WTC11 (cell line): ENCODE measurements at regions of chr6 and their contacts with region 1.

Region 1: GRCh38 chr6:24283043-24283985 is 74.5 kb downstream of the DCDC2 start:
- DNase-seq: peak; percentile 74
- ATAC-seq: peak; percentile 95
- H3K4me3 Mint-ChIP-seq: peak overlapping the region; percentile 48
- H3K27ac Mint-ChIP-seq: no peak overlapping the region
- H3K4me1 Mint-ChIP-seq: no peaks in the 10 kb centered on the region
- H3K27me3 Mint-ChIP-seq: no peaks in the 10 kb centered on the region
- CTCF ChIP-seq: no peak; the same call in 1 of the 2 replicates

Region 2: DNA sequence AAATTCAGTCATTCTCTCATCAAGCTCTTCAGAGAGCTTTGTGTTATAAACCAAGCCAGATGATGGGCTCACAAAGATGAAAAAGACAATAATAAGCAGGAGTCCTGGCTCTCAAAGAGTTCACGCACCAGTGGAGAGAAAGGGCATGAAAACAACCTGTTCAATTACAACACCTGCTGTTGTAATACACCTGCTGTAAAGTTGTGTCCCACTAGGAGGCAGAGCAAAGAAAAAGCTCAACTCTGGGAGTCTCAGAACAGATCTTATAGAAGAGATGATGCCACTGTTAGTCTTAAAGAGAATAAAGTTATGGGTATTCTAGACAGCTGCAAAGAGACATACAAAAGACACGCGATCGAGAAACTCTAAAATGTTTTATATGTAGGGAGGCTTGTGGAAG is 26.0 kb before region 1 on chr6:
- CTCF ChIA-PET with region 1: interaction called, 13 read pairs
- POLR2A ChIA-PET with region 1: no interaction called
- DNase-seq: no peak
- ATAC-seq: peak; percentile 90
- H3K4me3 Mint-ChIP-seq: no peak overlapping the region
- H3K27ac Mint-ChIP-seq: peak overlapping the region; percentile 50; the same call in 1 of the 2 replicates
- H3K4me1 Mint-ChIP-seq: peaks cover 18% of the 10 kb centered on the region
- H3K27me3 Mint-ChIP-seq: peaks cover 2% of the 10 kb centered on the region; the same call in 1 of the 2 replicates
- CTCF ChIP-seq: no peak; the same call in 1 of the 2 replicates

Region 3: GRCh38 chr6:24376866-24377265 is 93.6 kb after region 1 on chr6:
- CTCF ChIA-PET with region 1: interaction called, 10 read pairs
- POLR2A ChIA-PET with region 1: interaction called, 3 read pairs
- DNase-seq: no peak
- ATAC-seq: no peak
- H3K4me3 Mint-ChIP-seq: no peak overlapping the region
- H3K27ac Mint-ChIP-seq: no peak overlapping the region
- H3K4me1 Mint-ChIP-seq: peaks cover 14% of the 10 kb centered on the region
- H3K27me3 Mint-ChIP-seq: no peaks in the 10 kb centered on the region
- CTCF ChIP-seq: no peak

Region 4: DNA sequence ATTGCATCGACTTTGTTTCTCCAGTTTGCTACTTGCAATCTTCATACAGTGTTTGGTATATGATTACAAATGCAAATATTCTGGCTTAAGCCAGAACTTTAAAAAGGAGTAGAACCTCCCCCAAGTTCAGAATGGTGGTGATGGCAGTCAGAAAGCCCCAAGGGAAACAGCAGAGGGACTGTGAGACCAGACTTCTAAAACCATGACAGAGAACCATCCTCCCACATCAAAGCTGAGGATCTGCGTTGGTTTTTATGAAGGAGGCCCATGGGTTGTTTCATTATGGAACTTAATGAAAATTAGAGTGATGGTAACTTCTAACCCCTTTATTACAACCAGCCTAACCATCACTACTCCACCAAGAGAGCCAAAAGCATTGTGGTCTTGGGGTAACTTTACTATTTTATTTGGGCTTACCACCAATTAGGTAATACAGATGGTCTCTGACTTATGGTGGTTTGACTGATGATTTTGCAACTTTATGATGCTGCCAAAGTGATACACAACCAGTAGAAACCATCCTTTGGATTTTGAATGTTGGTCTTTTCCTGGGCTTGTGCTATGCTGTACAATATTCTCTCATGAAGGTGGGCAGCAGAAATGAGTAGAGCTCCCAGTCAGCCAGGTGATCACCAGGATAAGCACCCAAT is 108.6 kb after region 1 on chr6:
- CTCF ChIA-PET with region 1: interaction called, 56 read pairs
- POLR2A ChIA-PET with region 1: no interaction called
- DNase-seq: no peak
- ATAC-seq: no peak
- H3K4me3 Mint-ChIP-seq: no peak overlapping the region
- H3K27ac Mint-ChIP-seq: no peak overlapping the region
- H3K4me1 Mint-ChIP-seq: no peaks in the 10 kb centered on the region
- H3K27me3 Mint-ChIP-seq: no peaks in the 10 kb centered on the region; the same call in 1 of the 2 replicates
- CTCF ChIP-seq: no peak